ENCODE measurements at regions of chr11 and their contacts with region 1.

Region 1: GRCh38 chr11:58945663-58946062 is 6.4 kb downstream of the GLYATL1 start:
- DNase-seq: no peak
- H3K4me3 ChIP-seq: no peak overlapping the region
- H3K4me3 Mint-ChIP-seq: no peak overlapping the region
- H3K27ac Mint-ChIP-seq: no peak overlapping the region
- H3K4me1 ChIP-seq: peaks cover 15% of the 10 kb centered on the region; the same call in 1 of the 2 replicates
- H3K4me1 Mint-ChIP-seq: peaks cover 10% of the 10 kb centered on the region
- H3K27me3 ChIP-seq: no peaks in the 10 kb centered on the region
- H3K27me3 Mint-ChIP-seq: no peaks in the 10 kb centered on the region
- CTCF ChIP-seq: no peak

Region 2: DNA sequence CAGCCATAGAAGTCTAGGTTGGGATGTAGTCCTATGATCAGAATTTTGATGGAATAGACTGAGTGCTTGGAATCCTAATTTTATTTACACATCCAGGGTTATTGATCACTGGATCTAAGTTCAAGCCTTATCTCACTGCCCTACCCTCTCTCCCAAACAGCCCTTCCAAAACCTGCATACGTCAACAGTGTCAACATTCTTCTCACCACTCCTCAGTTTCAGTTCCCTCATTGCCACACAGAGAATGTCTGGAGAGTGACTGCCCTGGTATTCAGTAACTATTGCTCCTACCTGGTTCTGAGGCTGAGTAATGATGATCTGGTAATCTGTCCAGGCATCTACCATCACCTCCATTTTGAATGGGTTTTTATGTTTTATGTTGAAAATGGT is 53.6 kb after region 1 on chr11:
- CTCF ChIA-PET with region 1: no interaction called
- POLR2A ChIA-PET with region 1: no interaction called
- intact Hi-C with region 1: loop called (anchors 2 kb)
- DNase-seq: peak; percentile 70 to 72
- H3K4me3 ChIP-seq: no peak overlapping the region
- H3K4me3 Mint-ChIP-seq: peak overlapping the region; percentile 53
- H3K27ac Mint-ChIP-seq: peak overlapping the region; percentile 92
- H3K4me1 ChIP-seq: peaks cover 25% of the 10 kb centered on the region
- H3K4me1 Mint-ChIP-seq: peaks cover 18% of the 10 kb centered on the region
- H3K27me3 ChIP-seq: no peaks in the 10 kb centered on the region
- H3K27me3 Mint-ChIP-seq: no peaks in the 10 kb centered on the region
- CTCF ChIP-seq: no peak